AG04450 (cell line): ENCODE measurements at regions of chr1 and their contacts with region 1.

Region 1: GRCh38 chr1:241985787-241986186 is 13.1 kb downstream of the MAP1LC3C start:
- DNase-seq: no peak
- H3K4me3 ChIP-seq: no peak overlapping the region
- H3K27ac ChIP-seq: no peak overlapping the region
- H3K27me3 ChIP-seq: no peaks in the 10 kb centered on the region
- CTCF ChIP-seq: peak; percentile 58

Region 2: DNA sequence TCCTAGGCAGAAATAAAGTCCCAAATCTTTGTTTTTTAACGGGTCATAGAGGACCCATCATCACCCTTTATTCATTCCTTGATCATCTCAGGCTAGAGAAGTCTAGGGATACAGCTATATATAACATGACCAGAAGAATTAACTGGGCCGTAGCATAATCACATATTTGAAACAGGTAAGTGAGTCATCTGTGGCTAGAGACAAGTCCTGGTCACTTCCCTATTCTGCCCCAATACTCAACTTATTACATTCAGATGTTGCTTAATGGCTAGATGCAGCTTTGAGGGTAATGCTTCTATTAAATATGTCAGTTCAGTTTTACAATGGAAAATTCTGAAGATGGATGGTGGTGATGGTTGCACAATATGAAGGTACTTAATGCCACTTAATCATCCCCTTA is 90.8 kb before region 1 on chr1:
- CTCF ChIA-PET with region 1: interaction called, 12 read pairs
- POLR2A ChIA-PET with region 1: no interaction called
- DNase-seq: no peak
- H3K4me3 ChIP-seq: no peak overlapping the region
- H3K27ac ChIP-seq: no peak overlapping the region
- H3K27me3 ChIP-seq: no peaks in the 10 kb centered on the region
- CTCF ChIP-seq: no peak

Region 3: GRCh38 chr1:242349636-242350035 is 363.8 kb after region 1 on chr1:
- CTCF ChIA-PET with region 1: no interaction called
- POLR2A ChIA-PET with region 1: no interaction called
- DNase-seq: no peak
- H3K4me3 ChIP-seq: no peak overlapping the region
- H3K27ac ChIP-seq: no peak overlapping the region
- H3K27me3 ChIP-seq: no peaks in the 10 kb centered on the region
- CTCF ChIP-seq: no peak

Region 4: DNA sequence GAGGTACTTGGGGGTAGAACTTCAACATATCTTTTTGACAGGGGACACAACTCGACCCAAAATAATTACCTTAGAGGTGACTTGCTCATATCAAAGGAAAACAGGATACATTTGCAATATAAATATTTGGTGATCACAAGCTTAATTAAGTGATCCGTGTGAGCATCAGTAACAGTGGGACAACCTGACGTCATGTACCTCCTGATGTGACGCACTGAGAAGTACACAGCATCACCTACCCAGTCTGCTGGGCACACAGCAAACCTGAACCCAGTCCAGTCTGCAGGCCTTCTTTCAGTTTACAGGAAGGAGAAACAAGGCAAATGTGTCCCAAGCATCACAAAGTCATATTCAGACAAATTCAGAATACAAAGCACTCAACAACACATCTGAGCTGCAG is 400.4 kb after region 1 on chr1:
- CTCF ChIA-PET with region 1: no interaction called
- POLR2A ChIA-PET with region 1: no interaction called
- DNase-seq: no peak
- H3K4me3 ChIP-seq: no peak overlapping the region
- H3K27ac ChIP-seq: no peak overlapping the region
- H3K27me3 ChIP-seq: no peaks in the 10 kb centered on the region
- CTCF ChIP-seq: no peak

Region 5: DNA sequence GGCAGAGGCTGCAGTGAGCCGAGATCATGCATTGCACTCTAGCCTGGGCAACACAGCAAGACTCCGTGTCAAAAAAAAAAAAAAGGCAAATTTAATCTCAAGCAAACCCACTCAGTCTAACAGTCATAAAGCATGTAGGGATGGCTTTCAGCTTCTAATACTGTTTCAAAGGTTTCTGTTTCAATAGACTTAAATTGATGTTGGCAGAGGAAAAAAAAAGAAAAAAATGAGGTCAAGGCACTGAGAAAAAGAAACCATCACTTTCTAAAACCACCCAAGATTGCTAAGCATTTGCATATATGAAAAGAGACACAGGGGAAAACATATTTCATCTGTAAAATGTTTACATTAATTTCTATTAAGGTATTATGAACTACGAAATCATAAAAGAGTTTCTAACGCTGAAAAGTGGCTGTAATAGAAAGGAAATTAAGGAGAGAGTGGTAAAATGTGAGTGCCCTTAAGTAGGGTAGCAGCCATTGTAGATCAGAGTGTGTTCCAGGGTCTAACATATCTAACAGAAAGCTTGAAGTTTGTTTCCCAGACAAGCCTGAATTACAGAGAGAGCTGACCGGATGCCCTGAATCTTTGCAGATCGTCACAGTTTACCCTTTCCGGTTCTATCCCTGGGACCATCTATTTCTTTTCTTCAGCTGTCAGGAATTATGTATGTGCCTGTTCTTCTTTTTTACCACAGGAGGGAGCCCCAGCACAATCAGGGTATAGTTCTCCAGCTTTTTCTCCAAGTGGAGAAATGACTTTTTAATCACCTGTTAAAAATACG is 468.7 kb after region 1 on chr1:
- CTCF ChIA-PET with region 1: no interaction called
- POLR2A ChIA-PET with region 1: no interaction called
- DNase-seq: no peak
- H3K4me3 ChIP-seq: no peak overlapping the region
- H3K27ac ChIP-seq: no peak overlapping the region
- H3K27me3 ChIP-seq: no peaks in the 10 kb centered on the region
- CTCF ChIP-seq: peak; percentile 57